ENCODE measurements at regions of chr17 and their contacts with region 1.

Region 1: GRCh38 chr17:17041571-17042380 is 481 bp upstream of the MPRIP start:
- DNase-seq: peak; percentile 95
- ATAC-seq: peak; percentile 95
- H3K4me3 ChIP-seq: peak overlapping the region; percentile 58 to 78 (median 72)
- H3K27ac ChIP-seq: no peak overlapping the region
- H3K4me1 ChIP-seq: peaks cover 68% of the 10 kb centered on the region
- H3K27me3 ChIP-seq: no peaks in the 10 kb centered on the region; a peak in 1 of 5 replicates
- CTCF ChIP-seq: 0 out of 2 replicates have a peak, but pooled peaks have one; percentile 11
- EP300 ChIP-seq: no peak
- POLR2A ChIP-seq: no peak
- RAD21 ChIP-seq: no peak

Region 2: GRCh38 chr17:16938496-16939207 is 103.1 kb before region 1 on chr17:
- CTCF ChIA-PET with region 1: no interaction called
- POLR2A ChIA-PET with region 1: no interaction called
- in situ Hi-C with region 1: no loop called
- intact Hi-C with region 1: no loop called
- DNase-seq: no peak
- ATAC-seq: no peak
- H3K4me3 ChIP-seq: no peak overlapping the region
- H3K27ac ChIP-seq: no peak overlapping the region
- H3K4me1 ChIP-seq: no peaks in the 10 kb centered on the region
- H3K27me3 ChIP-seq: peaks cover 12 to 58% of the 10 kb centered on the region in 2 experiments; a peak in 4 of 5 replicates
- CTCF ChIP-seq: no peak
- EP300 ChIP-seq: no peak
- POLR2A ChIP-seq: no peak
- RAD21 ChIP-seq: no peak

Region 3: DNA sequence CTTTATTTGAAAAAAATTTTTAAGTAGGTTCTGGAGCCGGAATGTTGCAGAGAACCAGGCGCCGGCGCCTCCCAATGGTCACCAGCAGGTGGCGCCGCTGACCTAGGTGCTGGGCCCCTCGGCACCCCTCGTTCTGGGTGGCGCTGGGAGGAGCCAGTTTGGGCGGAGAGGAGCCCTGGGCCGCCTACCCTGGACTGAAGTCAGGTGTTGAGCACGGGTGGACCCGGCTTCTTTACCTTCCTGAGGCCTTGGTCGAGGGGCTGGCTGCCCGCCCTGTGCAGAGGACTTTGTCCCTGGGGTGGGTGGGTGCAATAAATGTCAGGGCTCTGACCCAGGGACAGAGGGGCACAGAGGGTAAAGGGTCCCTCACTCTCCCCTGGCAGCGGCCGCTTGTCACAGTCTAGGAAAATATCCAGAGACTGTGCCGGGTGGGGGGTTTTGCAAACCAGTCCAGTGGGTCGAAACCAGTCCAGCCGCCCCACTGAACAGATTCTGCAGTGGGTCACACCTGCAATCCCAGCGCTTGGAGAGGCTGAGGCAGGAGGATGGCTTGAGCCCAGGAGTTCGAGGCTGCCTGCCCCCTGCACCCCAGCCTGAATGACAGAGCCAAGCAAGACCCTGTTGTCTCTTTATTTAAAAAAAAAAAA is 39.8 kb before region 1 on chr17:
- CTCF ChIA-PET with region 1: no interaction called
- POLR2A ChIA-PET with region 1: no interaction called
- in situ Hi-C with region 1: no loop called
- intact Hi-C with region 1: loop called (anchors 5 kb)
- DNase-seq: peak; percentile 48
- ATAC-seq: peak; percentile 88
- H3K4me3 ChIP-seq: peak overlapping the region in 1 of 3 experiments; percentile 55; a peak in 1 of 6 replicates
- H3K27ac ChIP-seq: no peak overlapping the region
- H3K4me1 ChIP-seq: peaks cover 19% of the 10 kb centered on the region
- H3K27me3 ChIP-seq: peaks cover 0 to 22% of the 10 kb centered on the region in 2 experiments; a peak in 4 of 5 replicates
- CTCF ChIP-seq: peak; percentile 91
- EP300 ChIP-seq: no peak
- POLR2A ChIP-seq: no peak
- RAD21 ChIP-seq: peak; percentile 93

Region 4: DNA sequence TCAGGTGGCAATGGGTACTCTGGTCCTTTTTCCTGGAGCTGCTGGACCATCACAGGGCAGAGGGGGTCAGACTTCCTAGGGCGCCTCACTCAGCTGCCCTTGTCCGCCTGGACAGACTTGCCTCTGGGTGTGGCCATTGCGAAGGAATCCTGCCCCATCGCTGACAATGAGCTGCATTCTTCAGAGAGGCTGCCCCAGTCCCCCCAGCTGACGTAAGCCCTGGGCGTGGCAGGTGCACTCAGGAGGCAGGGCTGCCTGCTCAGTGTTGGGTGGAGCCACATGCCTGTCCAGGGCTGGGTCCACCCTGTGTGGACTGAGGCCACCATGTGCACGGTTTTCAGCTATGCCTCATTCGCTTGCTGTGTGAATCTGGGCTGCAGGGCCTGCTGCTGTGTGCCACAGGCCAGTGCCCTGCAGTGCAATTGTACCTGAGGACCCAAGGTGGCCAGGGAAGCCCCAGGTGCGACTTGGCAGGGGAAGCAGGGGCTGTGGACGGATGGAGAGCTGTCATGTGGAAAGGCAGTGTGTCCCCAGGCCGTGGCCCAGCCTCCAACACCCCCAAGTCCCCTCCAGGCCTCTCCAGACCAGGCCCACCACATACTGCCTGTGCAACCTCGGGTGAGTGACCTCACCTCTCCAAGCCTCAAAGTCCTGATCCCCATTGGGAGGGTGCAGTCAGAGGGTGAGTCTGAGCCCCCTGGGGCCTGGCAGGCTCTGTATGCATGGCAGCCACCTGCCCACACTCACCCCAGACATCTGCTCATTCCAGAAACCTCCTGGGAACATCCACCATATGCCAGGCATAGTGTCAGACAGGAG is 13.5 kb before region 1 on chr17:
- CTCF ChIA-PET with region 1: no interaction called
- POLR2A ChIA-PET with region 1: interaction called, 30 read pairs
- in situ Hi-C with region 1: no loop called
- intact Hi-C with region 1: loop called (anchors 1 kb)
- DNase-seq: peak; percentile 94
- ATAC-seq: peak; percentile 91
- H3K4me3 ChIP-seq: peak overlapping the region; percentile 33 to 65 (median 50)
- H3K27ac ChIP-seq: peak overlapping the region; percentile 74
- H3K4me1 ChIP-seq: peaks cover 72% of the 10 kb centered on the region
- H3K27me3 ChIP-seq: peaks cover 0 to 2% of the 10 kb centered on the region in 2 experiments; a peak in 2 of 5 replicates
- CTCF ChIP-seq: peak; percentile 54; the same call in 1 of the 2 replicates
- EP300 ChIP-seq: no peak
- POLR2A ChIP-seq: peak; percentile 61 to 74; a peak in 3 of 4 replicates
- RAD21 ChIP-seq: peak; percentile 46; the same call in 1 of the 2 replicates

Region 5: GRCh38 chr17:17051791-17052461 is 10.2 kb after region 1 on chr17:
- CTCF ChIA-PET with region 1: no interaction called
- POLR2A ChIA-PET with region 1: interaction called, 13 read pairs
- in situ Hi-C with region 1: no loop called
- intact Hi-C with region 1: no loop called
- DNase-seq: peak; percentile 63
- ATAC-seq: peak; percentile 86
- H3K4me3 ChIP-seq: peak overlapping the region in 1 of 3 experiments; percentile 35; a peak in 1 of 6 replicates
- H3K27ac ChIP-seq: peak overlapping the region; percentile 50
- H3K4me1 ChIP-seq: peaks cover 31% of the 10 kb centered on the region
- H3K27me3 ChIP-seq: no peaks in the 10 kb centered on the region
- CTCF ChIP-seq: no peak
- EP300 ChIP-seq: no peak
- POLR2A ChIP-seq: no peak
- RAD21 ChIP-seq: 0 out of 2 replicates have a peak, but pooled peaks have one; percentile 10

Region 6: GRCh38 chr17:17075038-17075781 is 33.4 kb after region 1 on chr17:
- CTCF ChIA-PET with region 1: no interaction called
- POLR2A ChIA-PET with region 1: no interaction called
- in situ Hi-C with region 1: no loop called
- intact Hi-C with region 1: loop called (anchors 5 kb)
- DNase-seq: no peak
- ATAC-seq: no peak
- H3K4me3 ChIP-seq: no peak overlapping the region
- H3K27ac ChIP-seq: no peak overlapping the region
- H3K4me1 ChIP-seq: peaks cover 48% of the 10 kb centered on the region
- H3K27me3 ChIP-seq: no peaks in the 10 kb centered on the region
- CTCF ChIP-seq: no peak
- EP300 ChIP-seq: no peak
- POLR2A ChIP-seq: no peak
- RAD21 ChIP-seq: no peak